ENCODE measurements at regions of chr7 and their contacts with region 1.

Region 1: GRCh38 chr7:53013925-53014324 is 21.5 kb upstream of the POM121L12 start:
- DNase-seq: no peak
- ATAC-seq: no peak
- H3K4me3 ChIP-seq: no peak overlapping the region
- H3K27ac ChIP-seq: no peak overlapping the region
- H3K4me1 ChIP-seq: no peaks in the 10 kb centered on the region
- H3K27me3 ChIP-seq: no peaks in the 10 kb centered on the region
- CTCF ChIP-seq: no peak

Region 2: DNA sequence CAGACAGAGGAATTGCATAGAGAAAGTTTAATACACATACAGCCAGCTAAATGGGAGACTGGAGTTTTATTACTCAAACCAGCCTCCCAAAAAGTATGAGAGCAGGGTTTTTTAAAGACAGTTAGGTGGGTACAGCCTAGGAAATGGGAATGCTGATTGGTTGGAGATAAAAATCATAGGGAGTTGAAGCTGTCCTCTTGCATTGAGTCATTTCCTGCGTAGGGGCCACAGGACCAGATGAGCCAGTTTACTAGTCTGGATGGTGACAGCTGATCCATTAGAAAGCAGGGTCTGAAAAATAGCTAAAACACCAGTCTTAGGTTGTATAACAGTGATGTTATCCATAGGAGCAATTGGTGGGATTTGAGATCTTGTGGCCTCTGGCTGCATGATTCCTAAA is 54.6 kb before region 1 on chr7:
- CTCF ChIA-PET with region 1: no interaction called
- POLR2A ChIA-PET with region 1: no interaction called
- in situ Hi-C with region 1: no loop called
- intact Hi-C with region 1: loop called (anchors 10 kb)
- DNase-seq: no peak
- ATAC-seq: no peak
- H3K4me3 ChIP-seq: no peak overlapping the region
- H3K27ac ChIP-seq: no peak overlapping the region
- H3K4me1 ChIP-seq: no peaks in the 10 kb centered on the region
- H3K27me3 ChIP-seq: no peaks in the 10 kb centered on the region
- CTCF ChIP-seq: no peak

Region 3: GRCh38 chr7:52992479-52993162 is 21.3 kb before region 1 on chr7:
- CTCF ChIA-PET with region 1: no interaction called
- POLR2A ChIA-PET with region 1: no interaction called
- in situ Hi-C with region 1: no loop called
- intact Hi-C with region 1: no loop called
- DNase-seq: no peak
- ATAC-seq: no peak
- H3K4me3 ChIP-seq: no peak overlapping the region
- H3K27ac ChIP-seq: no peak overlapping the region
- H3K4me1 ChIP-seq: no peaks in the 10 kb centered on the region
- H3K27me3 ChIP-seq: no peaks in the 10 kb centered on the region
- CTCF ChIP-seq: no peak

Region 4: GRCh38 chr7:53387515-53387914 is 373.6 kb after region 1 on chr7:
- CTCF ChIA-PET with region 1: no interaction called
- POLR2A ChIA-PET with region 1: no interaction called
- in situ Hi-C with region 1: no loop called
- intact Hi-C with region 1: no loop called
- DNase-seq: no peak
- ATAC-seq: no peak
- H3K4me3 ChIP-seq: no peak overlapping the region
- H3K27ac ChIP-seq: no peak overlapping the region
- H3K4me1 ChIP-seq: no peaks in the 10 kb centered on the region
- H3K27me3 ChIP-seq: no peaks in the 10 kb centered on the region
- CTCF ChIP-seq: no peak

Measured in Panc1 (cell line).